Astrocyte of the cerebellum (primary cell): ENCODE measurements at regions of chr1 and their contacts with region 1.

Region 1: GRCh38 chr1:33420870-33421775 is 9.8 kb downstream of the PHC2 start:
- DNase-seq: no peak
- H3K4me3 ChIP-seq: no peak overlapping the region
- CTCF ChIP-seq: no peak

Region 2: DNA sequence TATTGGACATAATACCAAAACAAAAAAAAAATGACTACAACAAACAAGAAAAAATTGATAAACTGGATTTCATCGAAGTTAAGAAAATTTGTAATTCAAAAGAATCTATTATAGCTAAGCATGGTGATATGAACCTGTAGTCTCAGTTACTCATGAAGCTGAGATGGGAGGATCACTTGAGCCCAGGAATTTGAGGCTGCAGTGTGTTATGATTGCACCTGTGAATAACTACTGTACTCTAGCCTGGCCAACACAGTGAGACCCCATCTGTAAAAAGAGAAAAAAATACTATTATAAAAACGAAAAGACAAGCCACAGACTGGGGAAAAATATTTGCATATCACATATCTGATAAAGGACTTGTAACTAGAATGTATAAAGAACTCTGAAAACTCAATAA is 214.8 kb before region 1 on chr1:
- in situ Hi-C with region 1: no loop called
- DNase-seq: no peak
- H3K4me3 ChIP-seq: no peak overlapping the region
- CTCF ChIP-seq: no peak

Region 3: DNA sequence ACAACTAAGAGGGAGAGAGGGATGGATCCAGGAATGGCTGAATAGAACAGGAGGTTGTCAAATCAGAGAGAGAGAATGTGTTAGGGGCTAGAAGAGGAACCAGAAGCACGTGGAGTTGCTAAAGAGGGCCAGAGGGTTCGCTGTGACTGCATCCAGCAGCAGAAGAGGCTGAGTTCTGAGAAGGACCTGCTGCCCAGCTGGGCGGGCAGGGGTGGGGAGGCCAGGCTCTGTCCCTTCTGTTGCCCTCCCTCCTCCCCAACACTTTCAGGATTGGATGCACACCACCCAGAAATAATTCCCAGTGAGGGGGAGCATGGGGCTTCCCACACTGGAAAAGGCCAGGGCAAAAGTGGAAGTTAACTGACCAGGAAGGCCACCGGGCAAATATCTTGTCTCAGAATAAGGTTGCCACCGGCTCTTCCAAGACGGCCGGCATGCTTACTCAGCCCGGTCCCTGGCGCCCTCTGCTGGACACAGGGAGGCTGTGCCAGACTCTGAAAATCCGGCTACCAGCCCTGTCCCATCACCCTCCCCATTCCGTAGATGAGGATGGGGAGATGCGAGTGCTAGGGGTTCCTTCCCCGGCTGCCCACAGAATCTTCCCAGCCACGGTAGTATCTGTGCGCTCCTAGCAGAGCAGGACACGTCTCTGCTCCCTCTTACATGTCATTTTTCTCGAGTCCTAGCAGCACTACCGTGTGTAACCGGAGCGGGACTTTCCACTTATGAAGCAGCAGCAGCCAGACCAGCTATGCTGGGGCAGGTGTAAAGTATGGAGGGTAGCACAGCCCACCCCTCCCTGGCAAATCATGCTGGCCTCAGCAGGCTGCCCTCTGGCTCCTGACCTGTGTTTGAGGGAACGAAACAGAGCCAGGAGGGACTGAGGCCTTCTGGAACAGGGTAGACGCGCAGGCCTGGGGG is 53.4 kb before region 1 on chr1:
- in situ Hi-C with region 1: no loop called
- DNase-seq: peak; percentile 64
- H3K4me3 ChIP-seq: no peak overlapping the region
- CTCF ChIP-seq: peak; percentile 92

Region 4: DNA sequence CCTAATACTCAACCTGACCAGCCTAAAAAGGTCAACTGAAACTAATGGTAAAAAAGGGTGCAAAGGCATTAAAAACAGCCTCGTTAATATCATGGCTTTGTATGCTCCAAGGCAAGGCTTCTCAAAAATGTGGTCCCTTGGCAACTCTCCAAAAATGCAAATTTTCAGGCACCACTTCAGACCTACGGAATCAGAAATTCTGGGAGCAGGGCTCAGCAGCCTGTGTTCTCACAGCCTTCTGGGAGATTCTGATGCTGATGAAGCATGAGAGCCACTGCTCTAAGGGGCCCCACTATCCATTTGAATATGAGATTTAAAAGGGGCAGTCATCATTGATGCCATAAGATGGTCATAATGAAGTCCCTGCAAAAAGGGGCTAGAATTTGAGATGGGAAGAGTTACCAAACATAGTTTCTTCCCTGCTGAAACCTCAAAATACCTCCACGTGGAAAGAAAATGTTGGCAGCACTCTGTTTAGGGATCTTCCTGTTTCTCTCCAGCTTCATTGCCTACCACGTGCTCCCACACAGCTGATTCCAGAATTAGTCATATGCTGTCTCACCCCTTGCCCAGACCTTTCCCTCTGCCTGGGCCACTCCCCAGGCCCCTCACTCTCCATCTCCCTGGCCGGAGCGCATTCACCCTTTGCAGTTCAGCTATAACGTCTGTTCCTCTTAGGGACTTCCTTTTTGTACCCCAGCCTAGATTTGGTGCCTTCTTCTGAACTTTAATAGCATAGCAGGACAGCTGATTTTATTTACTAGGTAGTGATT is 36.9 kb before region 1 on chr1:
- in situ Hi-C with region 1: loop called (anchors 5 kb)
- DNase-seq: peak; percentile 55
- H3K4me3 ChIP-seq: no peak overlapping the region
- CTCF ChIP-seq: no peak